ENCODE measurements at regions of chr1 and their contacts with region 1.

Region 1: GRCh38 chr1:201456499-201457309 is 12.3 kb downstream of the PHLDA3 start:
- DNase-seq: peak; percentile 97
- H3K4me3 Mint-ChIP-seq: no peak overlapping the region
- H3K27ac Mint-ChIP-seq: peak overlapping the region; percentile 67
- H3K4me1 Mint-ChIP-seq: peaks cover 49% of the 10 kb centered on the region
- H3K27me3 Mint-ChIP-seq: no peaks in the 10 kb centered on the region
- CTCF ChIP-seq: no peak

Region 2: DNA sequence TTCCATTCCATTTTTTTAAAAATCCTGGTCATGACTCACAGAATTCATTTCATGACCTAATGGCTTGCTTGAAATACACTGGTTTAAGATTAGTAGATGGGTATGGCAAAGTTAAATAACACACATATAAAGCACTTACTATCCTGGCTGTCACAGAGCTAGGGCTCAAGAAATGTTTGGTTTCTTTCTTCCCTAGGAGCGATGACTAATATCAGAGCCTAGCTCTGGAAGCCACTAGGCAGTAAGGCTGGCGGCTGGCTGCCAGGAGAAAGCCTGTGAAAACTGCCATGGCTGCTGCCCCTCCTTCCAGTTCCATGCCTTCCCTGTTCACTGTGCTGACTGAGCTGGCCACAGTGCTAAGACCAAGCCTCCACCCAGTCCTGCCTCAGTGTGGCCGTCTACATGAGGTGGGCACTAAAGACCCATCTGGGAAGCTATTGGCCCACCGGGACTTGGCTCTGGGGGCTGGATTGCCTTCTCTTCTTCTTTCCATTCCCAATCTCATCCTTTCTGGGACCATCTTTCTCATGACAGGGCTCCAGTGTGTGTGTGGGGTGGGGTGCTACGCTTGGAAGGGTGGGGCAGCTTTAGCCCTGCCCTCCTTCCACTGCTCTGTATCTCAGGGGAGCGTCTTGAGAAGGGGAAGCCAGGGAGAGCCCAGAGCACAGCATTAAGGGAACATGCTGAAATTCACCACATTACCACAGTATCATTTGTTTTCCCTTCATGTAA is 319.0 kb before region 1 on chr1:
- CTCF ChIA-PET with region 1: no interaction called
- POLR2A ChIA-PET with region 1: no interaction called
- intact Hi-C with region 1: no loop called
- DNase-seq: peak; percentile 78
- H3K4me3 Mint-ChIP-seq: no peak overlapping the region
- H3K27ac Mint-ChIP-seq: no peak overlapping the region
- H3K4me1 Mint-ChIP-seq: peaks cover 11% of the 10 kb centered on the region
- H3K27me3 Mint-ChIP-seq: no peaks in the 10 kb centered on the region
- CTCF ChIP-seq: no peak

Region 3: DNA sequence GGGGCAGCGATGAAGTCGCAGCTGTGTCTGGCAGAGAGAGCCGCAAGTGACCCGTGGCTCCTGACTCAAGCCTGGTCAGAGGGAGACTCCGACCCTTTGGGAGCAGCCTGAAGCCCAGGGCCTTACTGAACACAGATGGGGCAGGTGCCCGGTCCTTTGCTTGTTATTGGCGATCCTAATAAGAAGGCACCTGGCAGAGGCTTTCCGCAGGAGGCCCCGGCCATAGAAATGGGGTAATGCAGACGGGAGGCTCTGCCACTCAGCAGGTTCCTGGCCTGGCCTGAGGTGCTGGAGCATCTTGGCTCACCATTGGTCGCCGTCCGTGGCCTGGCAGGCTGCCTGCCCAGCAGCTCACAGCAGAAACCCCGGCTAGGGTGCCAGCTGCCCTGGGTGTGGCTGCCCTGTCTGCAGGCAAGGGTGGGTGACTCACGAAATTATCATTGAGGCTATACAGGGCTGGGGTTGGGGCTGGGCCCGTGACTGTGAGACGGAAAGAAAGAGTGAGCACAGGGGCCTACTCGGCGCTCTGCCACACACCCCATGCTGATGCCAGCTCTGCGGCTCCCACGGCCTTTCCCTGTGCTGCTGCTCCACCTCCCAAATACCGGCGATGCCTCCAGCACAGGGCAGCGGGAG is 181.5 kb before region 1 on chr1:
- CTCF ChIA-PET with region 1: no interaction called
- POLR2A ChIA-PET with region 1: interaction called, 11 read pairs
- intact Hi-C with region 1: no loop called
- DNase-seq: peak; percentile 100
- H3K4me3 Mint-ChIP-seq: no peak overlapping the region
- H3K27ac Mint-ChIP-seq: peak overlapping the region; percentile 79
- H3K4me1 Mint-ChIP-seq: peaks cover 52% of the 10 kb centered on the region
- H3K27me3 Mint-ChIP-seq: no peaks in the 10 kb centered on the region
- CTCF ChIP-seq: no peak